CD8-positive, alpha-beta T cell (primary cell): ENCODE measurements at regions of chr11 and their contacts with region 1.

Region 1: GRCh38 chr11:9573052-9573774 is at the start of gene WEE1:
- DNase-seq: peak; percentile 90 to 97 (median 96)
- ATAC-seq: peak; percentile 90
- H3K4me3 ChIP-seq: peak within 1 kb of the TSS; percentile 76 to 95
- H3K4me3 Mint-ChIP-seq: peak within 1 kb of the TSS; percentile 86
- H3K27ac ChIP-seq: peak within 1 kb of the TSS; percentile 41 to 62
- H3K27ac Mint-ChIP-seq: peak within 1 kb of the TSS; percentile 70
- H3K4me1 ChIP-seq: peaks cover 11% of the 10 kb centered on the region
- H3K4me1 Mint-ChIP-seq: peaks cover 23% of the 10 kb centered on the region
- H3K27me3 ChIP-seq: no peaks in the 10 kb centered on the region
- H3K27me3 Mint-ChIP-seq: peaks cover 11% of the 10 kb centered on the region
- CTCF ChIP-seq: no peak
- total RNA-seq, gene WEE1: 3.9 to 5.3 TPM

Region 2: GRCh38 chr11:8688414-8689362 is 884.5 kb before region 1 on chr11:
- CTCF ChIA-PET with region 1: no interaction called
- POLR2A ChIA-PET with region 1: no interaction called
- intact Hi-C with region 1: loop called in 1 of 2 experiments (anchors 10 kb)
- DNase-seq: peak; percentile 51 to 90 (median 80)
- ATAC-seq: peak; percentile 78
- H3K4me3 ChIP-seq: peak overlapping the region; percentile 78 to 79
- H3K4me3 Mint-ChIP-seq: peak overlapping the region; percentile 93
- H3K27ac ChIP-seq: peak overlapping the region; percentile 71 to 83
- H3K27ac Mint-ChIP-seq: peak overlapping the region; percentile 93
- H3K4me1 ChIP-seq: peaks cover 29% of the 10 kb centered on the region
- H3K4me1 Mint-ChIP-seq: peaks cover 41% of the 10 kb centered on the region
- H3K27me3 ChIP-seq: no peaks in the 10 kb centered on the region
- H3K27me3 Mint-ChIP-seq: no peaks in the 10 kb centered on the region
- CTCF ChIP-seq: no peak

Region 3: GRCh38 chr11:8964324-8965320 is 608.6 kb before region 1 on chr11 and contains the start of gene TMEM9B:
- CTCF ChIA-PET with region 1: no interaction called
- POLR2A ChIA-PET with region 1: no interaction called
- intact Hi-C with region 1: loop called in 1 of 2 experiments (anchors 5 kb)
- DNase-seq: peak; percentile 48 to 89 (median 75)
- ATAC-seq: peak; percentile 72
- H3K4me3 ChIP-seq: peak within 1 kb of the TSS; percentile 93 to 98
- H3K4me3 Mint-ChIP-seq: peak within 1 kb of the TSS; percentile 98
- H3K27ac ChIP-seq: peak within 1 kb of the TSS; percentile 94 to 99
- H3K27ac Mint-ChIP-seq: peak within 1 kb of the TSS; percentile 98
- H3K4me1 ChIP-seq: peaks cover 24% of the 10 kb centered on the region
- H3K4me1 Mint-ChIP-seq: peaks cover 36% of the 10 kb centered on the region
- H3K27me3 ChIP-seq: no peaks in the 10 kb centered on the region
- H3K27me3 Mint-ChIP-seq: no peaks in the 10 kb centered on the region
- CTCF ChIP-seq: no peak
- total RNA-seq, gene TMEM9B: 27.5 to 28.5 TPM

Region 4: DNA sequence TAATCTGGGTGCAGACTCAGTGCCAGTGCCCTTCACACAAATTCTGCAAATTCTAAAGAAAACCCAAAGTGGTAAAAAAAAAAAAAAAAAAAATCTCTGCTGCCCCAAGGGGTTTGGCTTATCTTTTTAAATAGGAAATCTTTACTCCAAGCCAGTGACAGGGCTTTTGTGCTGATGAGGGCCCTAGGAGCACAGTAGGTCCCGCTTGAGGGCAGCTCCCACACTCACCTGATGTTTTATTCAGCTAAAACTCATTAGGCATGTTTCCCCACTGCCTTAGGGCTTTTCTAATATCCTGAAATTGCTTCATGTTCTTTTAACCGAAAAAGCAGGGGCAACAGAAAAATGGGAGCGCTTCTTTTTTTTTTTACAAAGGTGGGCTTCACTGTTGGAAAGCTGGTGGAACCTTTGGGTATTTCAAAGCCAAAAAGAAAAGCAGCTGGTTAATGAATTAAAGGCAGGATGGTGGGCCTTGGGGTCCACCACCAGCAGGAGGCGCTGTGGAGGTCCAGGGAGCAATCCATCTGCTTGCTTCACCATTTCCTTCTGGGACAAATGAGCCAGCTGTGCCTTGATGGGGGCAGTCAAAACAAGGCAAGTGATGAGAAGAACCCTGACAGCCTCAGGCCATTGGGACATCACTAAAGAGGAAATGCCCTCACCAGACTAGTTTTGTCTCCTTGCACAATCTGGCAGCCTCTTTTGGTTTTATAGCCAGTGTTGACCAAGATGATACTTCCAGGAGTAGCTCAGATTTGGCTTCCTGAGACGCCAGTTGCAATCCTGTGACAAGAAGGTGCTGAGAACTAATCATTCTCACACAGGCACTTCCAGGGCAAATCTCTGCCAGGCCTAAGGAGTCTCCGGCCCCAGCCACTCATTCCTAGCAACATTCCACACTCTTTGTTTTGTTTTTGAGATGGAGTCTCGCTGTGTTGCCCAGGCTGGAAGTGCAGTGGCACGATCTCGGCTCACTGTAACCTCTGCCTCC is 38.1 kb before region 1 on chr11:
- CTCF ChIA-PET with region 1: interaction called, 15 read pairs
- POLR2A ChIA-PET with region 1: interaction called, 3 read pairs
- intact Hi-C with region 1: loop called (anchors 2 to 5 kb)
- DNase-seq: peak; percentile 53 to 87 (median 79)
- ATAC-seq: peak; percentile 61
- H3K4me3 ChIP-seq: no peak overlapping the region
- H3K4me3 Mint-ChIP-seq: no peak overlapping the region
- H3K27ac ChIP-seq: no peak overlapping the region
- H3K27ac Mint-ChIP-seq: no peak overlapping the region
- H3K4me1 ChIP-seq: no peaks in the 10 kb centered on the region
- H3K4me1 Mint-ChIP-seq: no peaks in the 10 kb centered on the region
- H3K27me3 ChIP-seq: no peaks in the 10 kb centered on the region
- H3K27me3 Mint-ChIP-seq: no peaks in the 10 kb centered on the region
- CTCF ChIP-seq: peak; percentile 75

Region 5: DNA sequence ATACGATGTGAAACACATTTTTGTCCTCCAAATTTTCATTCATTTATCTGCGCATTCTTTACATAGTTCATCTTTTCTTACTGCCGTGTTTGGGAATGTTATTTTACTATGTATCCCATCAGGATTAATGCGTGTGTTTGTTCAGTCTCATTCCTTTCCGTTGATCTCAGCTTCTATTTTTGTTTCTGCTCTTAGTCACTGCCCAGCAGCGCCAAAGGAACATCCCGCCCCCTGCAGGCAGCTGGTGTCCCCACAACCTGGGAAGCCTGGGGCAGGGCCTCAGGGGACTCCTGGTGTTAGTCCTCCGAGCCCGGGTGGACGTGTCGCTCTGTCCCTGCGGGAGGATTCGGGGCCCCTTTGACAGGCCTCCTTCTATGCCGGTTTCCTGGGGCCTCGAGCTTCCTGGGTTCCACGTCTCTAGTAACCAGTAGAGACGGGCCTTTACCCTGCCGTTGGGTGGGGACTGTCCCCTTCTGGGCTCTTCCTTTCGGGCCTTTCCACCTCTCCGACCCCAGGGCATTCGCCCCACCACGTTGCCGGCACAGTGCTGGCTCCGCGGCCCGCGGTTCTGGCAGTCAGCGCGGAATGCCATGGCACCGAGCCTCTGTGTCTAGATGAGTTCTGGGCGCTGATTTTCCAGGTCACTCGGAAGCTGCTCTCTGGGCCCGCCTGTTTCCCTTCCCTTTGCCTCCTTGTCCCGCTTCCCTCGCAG is 40.1 kb after region 1 on chr11:
- CTCF ChIA-PET with region 1: interaction called, 13 read pairs
- POLR2A ChIA-PET with region 1: interaction called, 10 read pairs
- intact Hi-C with region 1: loop called (anchors 1 kb)
- DNase-seq: peak; percentile 70 to 90 (median 84)
- ATAC-seq: peak; percentile 49
- H3K4me3 ChIP-seq: peak overlapping the region; percentile 69 to 70
- H3K4me3 Mint-ChIP-seq: peak overlapping the region; percentile 97
- H3K27ac ChIP-seq: peak overlapping the region; percentile 49 to 88
- H3K27ac Mint-ChIP-seq: peak overlapping the region; percentile 94
- H3K4me1 ChIP-seq: peaks cover 12% of the 10 kb centered on the region
- H3K4me1 Mint-ChIP-seq: peaks cover 16% of the 10 kb centered on the region
- H3K27me3 ChIP-seq: no peaks in the 10 kb centered on the region
- H3K27me3 Mint-ChIP-seq: no peaks in the 10 kb centered on the region
- CTCF ChIP-seq: peak; percentile 79

Region 6: GRCh38 chr11:9748361-9748970 is 175.3 kb after region 1 on chr11:
- CTCF ChIA-PET with region 1: interaction called, 4 read pairs
- POLR2A ChIA-PET with region 1: no interaction called
- intact Hi-C with region 1: loop called in 1 of 2 experiments (anchors 1 kb)
- DNase-seq: peak; percentile 15 to 82 (median 55)
- ATAC-seq: peak; percentile 98
- H3K4me3 ChIP-seq: no peak overlapping the region
- H3K4me3 Mint-ChIP-seq: no peak overlapping the region
- H3K27ac ChIP-seq: no peak overlapping the region
- H3K27ac Mint-ChIP-seq: no peak overlapping the region
- H3K4me1 ChIP-seq: no peaks in the 10 kb centered on the region
- H3K4me1 Mint-ChIP-seq: peaks cover 3% of the 10 kb centered on the region
- H3K27me3 ChIP-seq: no peaks in the 10 kb centered on the region
- H3K27me3 Mint-ChIP-seq: no peaks in the 10 kb centered on the region
- CTCF ChIP-seq: peak; percentile 55

Region 7: GRCh38 chr11:10455637-10456487 is 882.6 kb after region 1 on chr11:
- CTCF ChIA-PET with region 1: no interaction called
- POLR2A ChIA-PET with region 1: no interaction called
- intact Hi-C with region 1: loop called in 1 of 2 experiments (anchors 10 kb)
- DNase-seq: peak; percentile 30 to 87 (median 74)
- ATAC-seq: peak; percentile 74
- H3K4me3 ChIP-seq: peak overlapping the region; percentile 52 to 54
- H3K4me3 Mint-ChIP-seq: peak overlapping the region; percentile 91
- H3K27ac ChIP-seq: peak overlapping the region; percentile 10 to 67
- H3K27ac Mint-ChIP-seq: peak overlapping the region; percentile 98
- H3K4me1 ChIP-seq: peaks cover 58% of the 10 kb centered on the region
- H3K4me1 Mint-ChIP-seq: peaks cover 81% of the 10 kb centered on the region
- H3K27me3 ChIP-seq: no peaks in the 10 kb centered on the region
- H3K27me3 Mint-ChIP-seq: no peaks in the 10 kb centered on the region
- CTCF ChIP-seq: no peak